Panc1 (cell line): ENCODE measurements at regions of chr6 and their contacts with region 1.

Region 1: DNA sequence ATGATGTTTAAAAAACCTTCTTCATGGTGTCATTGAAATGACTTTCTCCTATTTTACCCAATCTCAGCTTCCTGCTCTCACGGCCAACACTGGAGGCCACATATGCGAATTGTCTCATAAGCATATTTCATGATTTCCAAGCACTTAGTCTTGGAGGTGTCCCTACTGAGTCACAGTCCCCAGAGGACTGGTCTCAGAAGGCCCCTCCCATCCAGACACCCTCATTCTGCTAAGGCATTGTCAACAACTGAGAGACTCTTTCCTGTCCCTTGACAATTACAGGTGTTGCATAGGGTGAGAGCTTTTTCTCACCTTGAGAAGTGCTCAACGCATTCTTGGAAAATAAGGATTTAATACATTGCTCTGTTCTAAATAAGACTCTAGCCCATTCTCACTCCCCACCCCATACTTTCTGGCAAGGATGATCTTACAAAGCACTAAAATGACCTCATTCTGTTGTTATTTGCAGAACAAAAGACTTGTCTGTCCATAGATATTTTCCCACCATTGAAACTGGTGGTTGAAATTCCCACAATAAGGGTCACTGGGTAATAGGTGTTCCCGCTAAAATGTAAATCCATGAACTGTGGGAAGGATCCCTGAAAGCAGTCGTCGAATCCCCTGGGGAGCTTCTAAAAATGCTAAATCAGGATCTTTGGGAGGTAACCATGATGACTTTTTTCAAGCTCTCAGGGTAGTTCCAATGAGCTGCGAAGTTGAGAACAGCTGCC is 32.3 kb upstream of the SLC22A23 start:
- DNase-seq: no peak
- ATAC-seq: no peak
- H3K4me3 ChIP-seq: no peak overlapping the region
- H3K27ac ChIP-seq: no peak overlapping the region
- H3K4me1 ChIP-seq: no peaks in the 10 kb centered on the region
- H3K27me3 ChIP-seq: peaks cover 12% of the 10 kb centered on the region
- CTCF ChIP-seq: no peak

Region 2: DNA sequence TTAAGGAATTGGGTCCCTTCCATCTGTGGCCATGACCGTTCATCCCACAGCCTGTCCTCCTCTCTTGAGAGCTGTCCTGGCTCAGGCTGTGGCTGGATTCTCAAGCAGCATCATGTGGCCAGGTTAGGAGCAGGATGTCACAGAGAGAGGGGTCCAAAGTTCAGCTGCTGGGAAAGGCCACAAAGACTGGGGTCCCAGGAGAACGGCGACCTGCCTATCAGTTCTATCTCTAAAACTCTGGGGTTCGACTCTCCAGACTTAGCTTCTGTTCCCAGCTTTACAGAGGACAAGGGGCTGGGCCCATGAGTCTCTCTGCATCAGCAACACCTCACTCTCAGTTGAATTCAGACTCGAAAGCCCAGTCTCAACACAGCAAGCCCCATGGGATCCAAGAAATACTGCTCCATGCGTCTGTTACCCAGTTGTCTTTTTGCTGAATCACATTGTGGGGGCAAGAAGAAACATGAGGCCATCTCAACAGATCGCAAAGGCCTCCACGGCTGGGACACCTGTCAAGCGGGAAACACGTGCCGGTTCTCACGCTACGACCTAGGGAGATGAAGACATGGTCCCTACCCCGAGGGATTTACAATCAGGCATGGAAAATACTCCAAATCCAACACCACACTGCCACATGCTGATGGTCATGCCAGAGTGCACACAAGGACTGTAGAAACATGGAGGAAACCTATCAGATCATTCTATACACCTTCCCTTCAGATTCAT is 127.7 kb before region 1 on chr6:
- CTCF ChIA-PET with region 1: no interaction called
- POLR2A ChIA-PET with region 1: interaction called, 20 read pairs
- in situ Hi-C with region 1: no loop called
- intact Hi-C with region 1: no loop called
- DNase-seq: no peak
- ATAC-seq: no peak
- H3K4me3 ChIP-seq: no peak overlapping the region
- H3K27ac ChIP-seq: no peak overlapping the region
- H3K4me1 ChIP-seq: peaks cover 12% of the 10 kb centered on the region
- H3K27me3 ChIP-seq: peaks cover 2% of the 10 kb centered on the region; the same call in 1 of the 2 replicates
- CTCF ChIP-seq: no peak